ENCODE measurements at regions of chr18 and their contacts with region 1.

Region 1: GRCh38 chr18:61635901-61636528 is 256.8 kb downstream of the RNF152 start:
- DNase-seq: peak; percentile 86
- H3K4me3 ChIP-seq: no peak overlapping the region
- H3K27ac ChIP-seq: peak overlapping the region; percentile 83 to 88 (median 87)
- H3K4me1 ChIP-seq: peaks cover 18 to 33% (median 28%) of the 10 kb centered on the region in 4 donors
- H3K27me3 ChIP-seq: no peaks in the 10 kb centered on the region
- CTCF ChIP-seq: peak; percentile 81 to 95 (median 90)
- EP300 ChIP-seq: no peak
- POLR2A ChIP-seq: no peak

Region 2: DNA sequence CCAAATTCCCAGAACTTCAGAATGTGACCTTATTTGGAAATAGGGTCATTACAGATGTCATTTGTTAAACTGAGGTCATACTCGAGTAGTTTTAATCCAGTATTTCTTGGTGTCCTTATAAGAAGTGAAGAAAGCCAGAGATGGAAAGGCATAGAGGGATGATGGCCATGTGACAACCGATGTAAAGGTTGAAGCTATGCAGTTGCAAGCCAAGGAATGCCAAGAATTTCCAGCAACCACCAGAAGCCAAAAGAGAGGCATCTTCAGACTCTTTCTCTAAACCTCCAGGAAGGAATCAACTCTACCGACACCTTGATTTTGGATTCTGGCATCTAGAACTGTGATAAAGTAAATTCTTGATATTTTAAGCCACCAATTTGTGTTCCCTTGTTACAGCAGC is 60.6 kb before region 1 on chr18:
- in situ Hi-C with region 1: no loop called
- intact Hi-C with region 1: loop called (anchors 10 kb)
- DNase-seq: no peak
- H3K4me3 ChIP-seq: no peak overlapping the region
- H3K27ac ChIP-seq: no peak overlapping the region
- H3K4me1 ChIP-seq: no peaks in the 10 kb centered on the region
- H3K27me3 ChIP-seq: peaks cover 3% of the 10 kb centered on the region
- CTCF ChIP-seq: no peak
- EP300 ChIP-seq: no peak
- POLR2A ChIP-seq: no peak

Region 3: DNA sequence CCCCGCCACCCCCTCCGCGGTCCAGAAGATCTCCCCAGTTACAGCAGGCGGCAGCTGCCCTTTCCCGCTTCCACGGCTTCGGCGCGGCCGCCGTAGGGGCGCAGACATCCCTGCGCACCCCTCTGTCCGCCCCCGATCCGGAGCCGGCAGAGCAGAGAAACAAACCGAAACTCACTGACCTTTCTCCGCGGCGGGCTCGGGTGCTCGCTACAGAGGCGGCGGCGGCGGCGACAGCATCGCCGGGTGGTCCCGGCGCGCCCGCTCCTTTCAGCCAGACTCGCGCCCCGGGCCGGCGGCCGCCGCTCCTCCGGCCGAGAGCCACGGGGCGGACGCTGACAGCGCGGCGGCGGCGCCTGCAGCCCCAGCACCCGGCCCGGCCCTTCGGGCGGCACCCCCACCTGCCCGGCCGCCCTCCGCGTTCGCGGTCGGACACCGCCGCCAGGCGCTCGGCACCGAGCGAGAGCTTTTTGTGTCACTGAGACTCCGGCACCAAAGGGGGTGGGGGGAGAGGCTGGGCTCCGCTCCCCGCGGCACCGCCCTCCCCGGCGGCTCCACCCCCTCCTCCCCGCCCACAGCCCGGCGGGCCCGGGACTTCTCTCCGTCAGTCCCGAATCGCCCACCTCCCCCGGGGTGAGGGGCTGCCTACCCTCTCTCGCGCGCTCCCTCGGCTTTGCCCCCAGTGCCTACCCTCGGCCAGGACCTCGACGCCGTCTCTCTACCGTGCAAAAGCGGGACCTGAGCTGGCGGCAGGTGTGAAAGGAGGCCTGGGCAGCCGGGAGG is 258.1 kb after region 1 on chr18:
- in situ Hi-C with region 1: loop called in 1 of 4 experiments (anchors 10 kb)
- intact Hi-C with region 1: loop called (anchors 10 kb)
- DNase-seq: peak; percentile 88
- H3K4me3 ChIP-seq: peak overlapping the region; percentile 79 to 95 (median 90)
- H3K27ac ChIP-seq: peak overlapping the region; percentile 83 to 87 (median 86)
- H3K4me1 ChIP-seq: peaks cover 7 to 33% (median 10%) of the 10 kb centered on the region in 4 donors
- H3K27me3 ChIP-seq: no peaks in the 10 kb centered on the region
- CTCF ChIP-seq: peak in 2 of 5 experiments; percentile 30 to 36
- EP300 ChIP-seq: no peak
- POLR2A ChIP-seq: peak; percentile 24